ENCODE measurements at regions of chr11 and their contacts with region 1.

Region 1: DNA sequence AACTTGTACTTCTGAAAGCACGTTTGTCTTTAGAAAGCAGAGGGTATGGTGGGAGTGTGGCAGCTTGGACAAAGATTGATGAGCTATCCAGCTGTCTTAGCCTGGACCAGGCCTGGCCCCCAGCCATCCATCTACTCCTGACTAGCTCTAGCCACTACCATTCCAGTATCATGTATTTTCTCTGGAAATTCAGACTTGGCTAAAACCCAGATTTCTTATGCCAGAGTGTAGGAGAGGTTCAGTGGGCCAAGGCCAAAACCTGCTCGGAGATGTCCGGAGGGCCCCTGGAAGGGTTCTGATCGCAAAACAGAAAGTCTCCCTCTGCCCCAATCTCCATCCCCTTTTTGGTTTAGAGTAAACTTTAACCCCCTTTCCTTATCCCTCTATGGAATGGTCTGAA is 24.8 kb upstream of the MTCH2 start:
- DNase-seq: no peak
- ATAC-seq: no peak
- H3K4me3 Mint-ChIP-seq: no peak overlapping the region
- H3K27ac Mint-ChIP-seq: no peak overlapping the region
- H3K4me1 Mint-ChIP-seq: peaks cover 27% of the 10 kb centered on the region
- H3K27me3 Mint-ChIP-seq: no peaks in the 10 kb centered on the region

Region 2: GRCh38 chr11:47248664-47249377 is 418.3 kb before region 1 on chr11 and contains the start of gene ACP2:
- CTCF ChIA-PET with region 1: no interaction called
- POLR2A ChIA-PET with region 1: no interaction called
- intact Hi-C with region 1: no loop called
- DNase-seq: peak; percentile 94
- ATAC-seq: peak; percentile 97
- H3K4me3 Mint-ChIP-seq: peak within 1 kb of the TSS; percentile 78
- H3K27ac Mint-ChIP-seq: peak within 1 kb of the TSS; percentile 95
- H3K4me1 Mint-ChIP-seq: peaks cover 22% of the 10 kb centered on the region
- H3K27me3 Mint-ChIP-seq: no peaks in the 10 kb centered on the region
- total RNA-seq, gene ACP2: 10.2 to 11.2 TPM

Region 3: DNA sequence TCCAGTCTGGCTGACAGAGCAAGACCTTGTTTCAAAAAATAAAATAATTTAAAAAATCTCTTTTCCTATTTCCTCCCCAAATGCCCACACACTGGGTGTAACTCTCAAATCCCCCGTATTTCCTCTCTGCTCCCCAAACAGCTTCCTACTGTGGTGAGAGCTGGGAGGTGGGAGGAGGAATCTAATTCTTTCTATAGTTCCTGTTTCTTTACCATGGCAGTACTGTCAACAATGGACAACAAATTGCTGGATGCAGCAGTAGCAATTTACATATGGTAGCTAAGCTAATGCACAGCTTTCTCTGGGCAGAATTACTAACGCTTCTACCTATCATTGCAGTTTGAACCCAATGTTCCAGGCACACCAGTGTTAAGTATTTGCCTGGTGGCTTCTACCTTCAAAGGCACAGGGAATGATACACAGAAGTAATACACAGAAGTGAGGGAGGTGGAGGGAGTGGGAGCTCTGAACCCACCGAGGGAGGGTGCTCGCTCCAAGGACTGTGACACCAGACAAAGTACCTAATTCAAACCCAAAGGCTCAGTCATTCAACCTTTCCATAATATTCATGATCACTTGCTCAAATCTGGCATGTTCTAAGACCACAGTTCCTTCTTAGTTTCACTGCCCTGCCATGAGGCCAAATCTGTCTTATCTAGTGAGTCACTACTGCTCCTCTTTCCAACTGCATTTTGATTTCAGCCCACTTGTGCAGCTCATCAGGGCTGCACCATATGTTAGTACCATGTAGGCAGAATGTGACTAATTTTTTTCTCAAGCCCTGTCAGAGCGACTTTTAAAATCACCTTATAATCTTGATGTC is 152.1 kb before region 1 on chr11:
- CTCF ChIA-PET with region 1: no interaction called
- POLR2A ChIA-PET with region 1: no interaction called
- intact Hi-C with region 1: loop called (anchors 1 kb)
- DNase-seq: peak; percentile 69
- ATAC-seq: peak; percentile 95
- H3K4me3 Mint-ChIP-seq: peak overlapping the region; percentile 0
- H3K27ac Mint-ChIP-seq: peak overlapping the region; percentile 84
- H3K4me1 Mint-ChIP-seq: peaks cover 89% of the 10 kb centered on the region
- H3K27me3 Mint-ChIP-seq: no peaks in the 10 kb centered on the region

Region 4: DNA sequence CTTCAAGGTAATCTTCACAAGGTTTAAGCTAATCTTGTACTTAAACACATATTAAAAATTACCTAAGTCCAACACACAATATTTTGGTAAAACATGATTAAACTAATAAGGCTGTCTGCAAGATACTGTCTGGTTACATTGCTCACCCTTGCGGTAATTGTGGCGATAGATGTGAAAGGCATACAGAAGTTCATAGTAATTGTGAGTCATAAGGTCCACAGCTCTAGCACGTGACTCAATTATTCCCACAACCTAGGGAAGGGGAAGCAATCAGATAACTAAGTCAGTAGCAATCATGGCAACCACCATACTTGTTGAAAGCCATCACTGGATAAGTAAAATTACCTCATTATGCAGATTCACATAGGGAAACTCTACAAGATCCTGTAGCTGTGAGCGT is 130.5 kb after region 1 on chr11:
- CTCF ChIA-PET with region 1: no interaction called
- POLR2A ChIA-PET with region 1: no interaction called
- intact Hi-C with region 1: loop called in 1 of 2 experiments (anchors 1 kb)
- DNase-seq: peak; percentile 78
- ATAC-seq: peak; percentile 97
- H3K4me3 Mint-ChIP-seq: no peak overlapping the region
- H3K27ac Mint-ChIP-seq: peak overlapping the region; percentile 88
- H3K4me1 Mint-ChIP-seq: peaks cover 13% of the 10 kb centered on the region
- H3K27me3 Mint-ChIP-seq: no peaks in the 10 kb centered on the region